OCI-LY7 (cell line): ENCODE measurements at regions of chr13 and their contacts with region 1.

Region 1: DNA sequence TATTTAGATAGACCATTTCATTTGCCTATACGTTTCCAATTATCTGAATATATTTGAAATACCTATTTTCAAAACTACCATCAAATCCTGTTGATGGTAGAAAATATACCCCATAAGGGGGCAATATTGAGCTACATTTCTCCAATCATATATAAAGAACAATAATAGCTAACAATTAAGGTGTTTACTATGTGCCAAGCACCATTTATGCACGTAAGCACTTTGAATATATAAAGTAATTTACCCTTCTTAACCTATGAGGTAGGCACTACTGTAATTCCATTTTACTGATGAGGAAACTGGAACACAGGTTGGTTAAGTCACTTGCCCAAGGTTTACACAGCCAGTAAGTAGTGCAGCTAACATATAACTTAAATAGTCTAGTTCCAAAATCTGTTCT is 79.2 kb downstream of the UBL3 start:
- DNase-seq: peak; percentile 41
- H3K4me3 ChIP-seq: no peak overlapping the region
- H3K27ac ChIP-seq: no peak overlapping the region
- H3K4me1 ChIP-seq: no peaks in the 10 kb centered on the region
- CTCF ChIP-seq: peak; percentile 81

Region 2: GRCh38 chr13:29782798-29783197 is 11.6 kb after region 1 on chr13:
- CTCF ChIA-PET with region 1: no interaction called
- POLR2A ChIA-PET with region 1: interaction called, 10 read pairs
- intact Hi-C with region 1: no loop called
- DNase-seq: no peak
- H3K4me3 ChIP-seq: no peak overlapping the region
- H3K27ac ChIP-seq: no peak overlapping the region
- H3K4me1 ChIP-seq: no peaks in the 10 kb centered on the region
- CTCF ChIP-seq: no peak